ENCODE measurements at regions of chr17 and their contacts with region 1.

Region 1: DNA sequence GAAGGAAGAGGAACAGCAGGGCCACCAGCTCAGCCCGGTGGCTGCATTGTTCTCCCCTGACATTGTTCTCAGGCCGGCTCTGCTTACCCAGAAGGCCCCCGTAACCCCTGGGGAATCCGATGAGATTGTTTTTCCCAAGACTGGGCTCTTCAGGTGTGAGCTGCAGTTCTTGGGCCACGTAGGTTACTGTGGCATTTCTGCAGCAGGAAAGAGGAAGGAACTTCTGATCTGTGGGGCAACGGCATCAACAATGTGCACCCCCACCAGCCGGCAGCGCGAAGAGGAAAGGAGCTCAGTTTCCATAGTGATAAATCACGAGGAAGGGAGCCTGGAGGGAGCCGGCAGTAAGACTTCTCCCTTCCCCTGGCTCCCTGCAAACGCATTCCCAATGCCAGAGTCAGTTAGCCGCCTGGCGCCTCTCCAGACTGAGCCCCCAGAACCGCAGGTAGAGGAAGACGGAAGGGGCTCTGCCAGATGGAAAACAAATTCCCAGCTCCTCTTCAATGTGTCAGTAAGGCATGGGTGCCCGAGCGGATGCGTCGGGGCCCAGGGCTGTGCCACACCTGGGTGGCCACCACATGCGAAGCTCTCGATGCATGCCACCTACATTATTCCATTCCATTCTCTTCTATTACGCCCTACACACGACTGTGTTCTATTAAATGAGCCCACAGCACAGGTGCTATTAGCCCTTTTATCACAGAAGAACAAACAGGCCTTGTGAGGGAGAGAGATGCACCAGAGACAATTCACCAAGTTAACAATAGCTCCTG is 21.5 kb upstream of the PECAM1 start:
- DNase-seq: no peak
- ATAC-seq: peak; percentile 33
- H3K4me3 Mint-ChIP-seq: peak overlapping the region; percentile 72
- H3K27ac Mint-ChIP-seq: peak overlapping the region; percentile 74
- H3K4me1 Mint-ChIP-seq: peaks cover 25% of the 10 kb centered on the region
- H3K27me3 Mint-ChIP-seq: no peaks in the 10 kb centered on the region

Region 2: DNA sequence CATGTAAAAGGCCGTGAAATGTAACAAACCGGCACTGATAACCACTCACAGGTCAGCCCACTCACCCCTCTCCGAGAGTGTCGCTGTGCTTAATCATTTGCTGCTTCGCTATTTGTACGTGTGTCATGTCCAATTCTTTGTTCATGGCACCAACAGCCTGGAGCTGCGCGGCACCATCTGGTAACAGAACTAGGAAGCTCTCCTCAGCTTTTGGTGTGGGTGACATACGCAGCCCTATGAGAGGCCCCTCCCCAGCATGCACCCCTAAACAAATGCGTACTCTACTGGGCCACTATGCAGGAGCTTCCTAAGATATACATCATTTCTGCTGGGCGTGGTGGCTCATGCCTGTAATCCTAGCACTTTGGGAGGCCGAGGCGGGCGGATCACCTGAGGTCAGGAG is 19.2 kb before region 1 on chr17:
- POLR2A ChIA-PET with region 1: interaction called, 12 read pairs
- DNase-seq: peak; percentile 57
- ATAC-seq: peak; percentile 56
- H3K4me3 Mint-ChIP-seq: peak overlapping the region; percentile 87
- H3K27ac Mint-ChIP-seq: peak overlapping the region; percentile 92
- H3K4me1 Mint-ChIP-seq: peaks cover 60% of the 10 kb centered on the region
- H3K27me3 Mint-ChIP-seq: no peaks in the 10 kb centered on the region

Region 3: GRCh38 chr17:64448665-64449512 is 36.7 kb after region 1 on chr17 and contains the start of gene MILR1:
- POLR2A ChIA-PET with region 1: no interaction called
- DNase-seq: no peak
- ATAC-seq: no peak
- H3K4me3 Mint-ChIP-seq: peak within 1 kb of the TSS; percentile 9
- H3K27ac Mint-ChIP-seq: peak within 1 kb of the TSS; percentile 64
- H3K4me1 Mint-ChIP-seq: peaks cover 12% of the 10 kb centered on the region
- H3K27me3 Mint-ChIP-seq: no peaks in the 10 kb centered on the region
- total RNA-seq, gene MILR1: 0.65 to 1.2 TPM

Region 4: DNA sequence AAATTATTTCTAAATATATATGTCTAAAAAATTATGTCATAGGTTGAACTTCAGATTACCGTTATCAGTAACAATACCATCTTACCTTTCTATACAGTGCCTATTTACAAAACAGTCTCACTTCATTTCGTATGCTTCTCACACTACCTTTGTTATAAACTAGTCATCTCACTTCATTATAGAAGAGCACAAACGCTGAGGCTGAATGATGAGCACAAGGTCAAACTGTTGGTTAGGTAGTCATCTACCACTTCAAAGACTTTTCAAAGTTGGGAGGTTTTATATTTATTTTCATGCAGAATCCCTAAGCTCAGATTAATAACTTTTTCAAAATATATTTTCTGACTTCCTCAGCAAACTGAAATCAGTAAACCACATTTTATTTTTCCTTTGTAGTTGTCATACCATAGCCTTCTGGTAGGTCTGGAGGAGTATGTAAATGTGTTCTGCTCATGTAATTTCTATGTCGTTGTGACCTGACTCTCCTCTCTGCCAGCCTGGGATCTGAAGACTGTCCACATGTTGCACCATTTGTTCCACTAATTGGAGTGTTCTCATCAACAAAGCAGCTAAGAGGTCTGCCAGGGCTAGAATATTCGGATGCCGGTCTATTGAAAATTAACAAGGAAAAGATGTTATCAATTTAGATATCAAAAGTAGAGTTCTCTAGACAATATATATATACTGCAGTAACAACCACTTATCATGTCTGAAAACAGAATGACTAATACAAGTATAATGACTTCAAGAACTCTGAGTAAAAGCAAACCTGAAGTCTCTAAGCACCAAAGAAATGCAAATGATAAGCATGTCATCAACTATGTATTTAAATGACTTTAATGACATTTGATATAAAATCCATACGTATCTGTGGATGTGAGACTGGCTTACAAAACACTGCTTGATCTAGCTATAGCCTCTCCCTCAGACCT is 168.5 kb after region 1 on chr17:
- POLR2A ChIA-PET with region 1: no interaction called
- DNase-seq: no peak
- ATAC-seq: no peak
- H3K4me3 Mint-ChIP-seq: no peak overlapping the region
- H3K27ac Mint-ChIP-seq: no peak overlapping the region
- H3K4me1 Mint-ChIP-seq: peaks cover 5% of the 10 kb centered on the region
- H3K27me3 Mint-ChIP-seq: no peaks in the 10 kb centered on the region